ENCODE measurements at regions of chr9 and their contacts with region 1.

Region 1: DNA sequence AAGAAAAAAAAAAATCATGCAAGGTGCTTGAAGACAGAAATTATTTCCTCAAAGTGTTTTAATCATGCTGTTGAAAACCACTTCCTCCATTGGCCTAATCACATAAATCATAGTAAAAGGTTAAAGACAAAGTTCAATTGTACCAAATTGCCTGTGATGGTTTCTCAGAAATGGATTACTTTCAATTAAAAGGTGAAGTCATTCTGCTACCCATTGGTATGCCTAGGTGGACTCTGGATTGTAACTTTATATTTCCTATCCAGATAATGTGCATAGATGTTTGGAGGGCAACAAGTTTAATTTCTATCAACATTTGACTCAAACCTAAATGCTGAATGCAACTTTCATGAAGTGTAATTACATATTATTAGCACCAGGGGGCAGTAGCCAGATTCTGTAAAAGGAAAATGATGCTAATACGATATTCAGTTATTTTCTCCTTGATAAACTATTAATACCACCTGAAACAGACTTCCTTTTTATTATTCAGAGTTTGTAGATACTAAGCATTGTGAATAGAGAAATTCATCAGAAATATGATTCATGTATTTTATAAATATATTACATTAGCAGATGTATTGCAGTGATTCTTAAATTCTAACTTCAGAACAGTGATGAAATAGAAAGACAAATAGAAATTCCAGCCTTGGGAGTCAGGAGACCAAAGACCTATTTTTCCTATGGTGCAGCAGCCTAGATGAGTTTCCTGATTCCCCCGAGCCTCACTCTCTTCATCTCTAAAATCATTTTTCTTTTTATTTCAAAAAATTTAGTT is 148.2 kb downstream of the CAAP1 start:
- DNase-seq: peak in 1 of 2 donors; percentile 48
- ATAC-seq: no peak
- H3K4me3 ChIP-seq: no peak overlapping the region
- H3K4me3 Mint-ChIP-seq: no peak overlapping the region
- H3K27ac ChIP-seq: no peak overlapping the region
- H3K27ac Mint-ChIP-seq: no peak overlapping the region
- H3K4me1 ChIP-seq: no peaks in the 10 kb centered on the region
- H3K4me1 Mint-ChIP-seq: no peaks in the 10 kb centered on the region
- H3K27me3 ChIP-seq: no peaks in the 10 kb centered on the region
- H3K27me3 Mint-ChIP-seq: peaks cover 0 to 4% of the 10 kb centered on the region in 2 donors
- CTCF ChIP-seq: peak; percentile 82

Region 2: DNA sequence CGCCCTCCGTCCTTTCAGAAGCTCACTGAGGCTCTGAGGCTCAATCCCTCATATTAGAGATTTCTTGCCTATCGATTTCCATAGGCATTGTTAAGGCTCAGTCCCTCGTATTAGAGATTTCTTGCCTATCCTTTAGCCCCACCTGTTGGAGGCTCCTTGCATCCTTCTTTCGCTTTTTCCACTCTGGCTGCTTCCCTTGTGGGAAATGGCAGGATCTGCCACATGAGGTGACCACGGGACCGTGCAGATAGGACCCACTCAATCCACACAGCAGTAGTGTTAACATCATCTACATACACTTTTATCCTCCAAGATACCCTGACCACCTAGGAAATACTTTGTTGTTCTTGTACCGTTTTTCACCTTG is 231.3 kb after region 1 on chr9:
- intact Hi-C with region 1: loop called (anchors 2 kb)
- DNase-seq: peak in 1 of 2 donors; percentile 43
- ATAC-seq: no peak
- H3K4me3 ChIP-seq: no peak overlapping the region
- H3K4me3 Mint-ChIP-seq: no peak overlapping the region
- H3K27ac ChIP-seq: no peak overlapping the region
- H3K27ac Mint-ChIP-seq: no peak overlapping the region
- H3K4me1 ChIP-seq: no peaks in the 10 kb centered on the region
- H3K4me1 Mint-ChIP-seq: no peaks in the 10 kb centered on the region
- H3K27me3 ChIP-seq: no peaks in the 10 kb centered on the region
- H3K27me3 Mint-ChIP-seq: no peaks in the 10 kb centered on the region
- CTCF ChIP-seq: no peak